ENCODE measurements at regions of chr3 and their contacts with region 1.

Region 1: GRCh38 chr3:6799264-6799915 is 61.5 kb upstream of the GRM7 start:
- DNase-seq: no peak
- ATAC-seq: no peak
- H3K4me3 ChIP-seq: no peak overlapping the region
- H3K27ac ChIP-seq: no peak overlapping the region
- H3K4me1 ChIP-seq: no peaks in the 10 kb centered on the region
- H3K27me3 ChIP-seq: no peaks in the 10 kb centered on the region
- CTCF ChIP-seq: peak; percentile 23; the same call in 1 of the 2 replicates
- POLR2A ChIP-seq: no peak
- RAD21 ChIP-seq: no peak

Region 2: GRCh38 chr3:5226783-5227182 is 1572.6 kb before region 1 on chr3:
- CTCF ChIA-PET with region 1: no interaction called
- POLR2A ChIA-PET with region 1: no interaction called
- dilution Hi-C with region 1: no loop called
- in situ Hi-C with region 1: no loop called
- intact Hi-C with region 1: loop called (anchors 5 kb)
- DNase-seq: peak; percentile 47
- ATAC-seq: peak; percentile 68
- H3K4me3 ChIP-seq: no peak overlapping the region
- H3K27ac ChIP-seq: no peak overlapping the region
- H3K4me1 ChIP-seq: no peaks in the 10 kb centered on the region
- H3K27me3 ChIP-seq: peaks cover 2% of the 10 kb centered on the region; the same call in 1 of the 2 replicates
- CTCF ChIP-seq: peak; percentile 67
- POLR2A ChIP-seq: no peak
- RAD21 ChIP-seq: peak; percentile 66

Measured in IMR-90 (cell line).